OCI-LY7 (cell line): ENCODE measurements at regions of chr11 and their contacts with region 1.

Region 1: DNA sequence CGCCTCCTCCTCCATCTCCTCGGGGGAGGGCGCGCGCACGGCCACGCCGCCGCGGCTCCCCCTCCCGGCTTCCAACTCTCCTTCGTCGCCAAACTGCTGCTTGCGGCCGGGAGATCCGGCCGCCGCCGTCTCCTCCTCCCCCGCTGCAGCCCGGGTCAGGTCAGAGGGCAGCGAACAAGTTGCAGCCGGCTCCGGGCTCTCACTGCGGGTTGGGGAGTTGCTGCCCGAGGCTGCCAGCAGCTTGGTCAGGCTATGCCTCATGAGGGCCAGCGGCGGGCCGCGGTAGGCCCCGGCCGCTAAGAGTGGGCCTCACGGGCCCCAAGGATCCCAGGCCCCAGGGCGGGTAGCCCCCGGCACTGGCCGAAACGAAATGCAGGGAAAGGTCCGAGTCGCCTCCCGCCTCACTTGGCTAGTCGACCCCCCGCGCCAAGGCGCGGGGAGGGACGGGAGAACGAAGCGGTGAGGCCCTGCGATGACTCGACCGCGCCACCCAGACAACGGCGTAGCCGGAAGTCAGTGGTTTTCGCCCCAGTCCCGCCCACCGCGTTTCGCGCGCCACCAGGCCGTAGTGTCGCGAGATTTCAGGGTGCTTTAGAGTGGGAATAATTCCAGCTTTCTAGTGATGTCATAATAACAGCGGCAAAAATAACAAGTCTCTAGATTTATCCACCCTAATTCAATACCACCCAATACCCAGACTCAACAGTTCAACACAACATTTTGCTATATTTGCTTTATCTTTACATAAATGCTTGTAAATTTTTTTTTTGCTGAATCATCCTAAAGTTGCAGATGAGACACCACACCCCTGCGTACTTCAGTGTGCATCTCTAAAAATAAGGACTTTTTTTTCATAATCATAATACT is at the start of gene CREBZF:
- DNase-seq: peak; percentile 96
- H3K4me3 ChIP-seq: peak within 1 kb of the TSS; percentile 93
- H3K27ac ChIP-seq: peak within 1 kb of the TSS; percentile 86
- H3K4me1 ChIP-seq: peaks cover 26% of the 10 kb centered on the region
- CTCF ChIP-seq: no peak
- total RNA-seq, gene CREBZF: 120 and 128 TPM in 2 replicates

Region 2: DNA sequence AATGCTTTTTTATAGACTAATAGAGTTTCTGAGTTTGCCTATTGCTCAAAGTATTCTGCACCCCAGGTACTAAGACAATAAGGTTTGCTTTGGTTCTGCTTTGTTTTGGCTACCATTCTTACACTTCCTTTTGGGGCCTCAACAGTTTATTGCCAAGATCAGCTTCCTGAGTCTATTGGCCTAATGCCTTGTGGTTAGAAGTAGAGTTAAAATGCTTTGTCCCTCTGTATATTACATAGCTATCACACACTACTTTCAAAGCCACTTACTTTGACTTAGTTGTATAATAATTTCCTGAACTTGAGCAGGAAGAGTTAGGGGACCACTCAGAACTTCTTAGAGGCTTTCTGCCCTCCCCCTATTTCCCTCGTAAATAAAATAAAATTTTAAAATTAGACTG is 134.2 kb before region 1 on chr11:
- CTCF ChIA-PET with region 1: no interaction called
- POLR2A ChIA-PET with region 1: no interaction called
- intact Hi-C with region 1: no loop called
- DNase-seq: no peak
- H3K4me3 ChIP-seq: no peak overlapping the region
- H3K27ac ChIP-seq: no peak overlapping the region
- H3K4me1 ChIP-seq: no peaks in the 10 kb centered on the region
- CTCF ChIP-seq: no peak

Region 3: DNA sequence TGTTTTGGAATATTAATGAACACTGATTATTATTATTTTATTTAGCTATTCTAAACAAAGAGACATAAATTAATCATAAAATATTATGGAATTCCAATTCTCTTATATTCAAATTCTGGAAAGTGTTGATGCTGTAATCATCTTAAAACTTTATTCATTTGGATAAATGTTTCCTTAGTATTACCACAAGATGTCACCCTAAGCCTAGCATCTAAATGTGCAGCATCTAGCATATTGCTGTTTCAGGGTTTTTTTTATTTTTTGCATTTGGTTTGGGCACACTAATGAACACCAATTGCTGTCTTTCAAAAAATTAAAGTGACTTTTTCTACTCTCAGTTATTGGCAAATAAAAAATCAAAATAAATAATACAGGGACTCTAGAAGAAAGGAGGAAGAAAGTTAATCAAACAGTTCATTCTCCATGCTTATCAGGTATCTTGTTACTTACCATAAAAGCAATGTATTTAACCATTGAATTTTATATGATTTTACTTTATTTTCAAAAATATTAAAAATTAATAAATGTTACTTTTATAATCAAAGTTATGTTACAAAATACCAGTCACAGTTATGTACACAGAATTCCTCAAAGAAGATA is 69.5 kb before region 1 on chr11:
- CTCF ChIA-PET with region 1: no interaction called
- POLR2A ChIA-PET with region 1: no interaction called
- intact Hi-C with region 1: loop called (anchors 2 kb)
- DNase-seq: peak; percentile 66
- H3K4me3 ChIP-seq: no peak overlapping the region
- H3K27ac ChIP-seq: no peak overlapping the region
- H3K4me1 ChIP-seq: no peaks in the 10 kb centered on the region
- CTCF ChIP-seq: peak; percentile 90

Region 4: GRCh38 chr11:85627998-85628770 is 36.7 kb before region 1 on chr11 and contains the start of gene TMEM126B:
- CTCF ChIA-PET with region 1: no interaction called
- POLR2A ChIA-PET with region 1: interaction called, 7 read pairs
- intact Hi-C with region 1: loop called (anchors 2 kb)
- DNase-seq: peak; percentile 96
- H3K4me3 ChIP-seq: peak within 1 kb of the TSS; percentile 96
- H3K27ac ChIP-seq: peak within 1 kb of the TSS; percentile 40
- H3K4me1 ChIP-seq: peaks cover 35% of the 10 kb centered on the region
- CTCF ChIP-seq: no peak
- total RNA-seq, gene TMEM126B: 45.4 and 47.4 TPM in 2 replicates

Region 5: DNA sequence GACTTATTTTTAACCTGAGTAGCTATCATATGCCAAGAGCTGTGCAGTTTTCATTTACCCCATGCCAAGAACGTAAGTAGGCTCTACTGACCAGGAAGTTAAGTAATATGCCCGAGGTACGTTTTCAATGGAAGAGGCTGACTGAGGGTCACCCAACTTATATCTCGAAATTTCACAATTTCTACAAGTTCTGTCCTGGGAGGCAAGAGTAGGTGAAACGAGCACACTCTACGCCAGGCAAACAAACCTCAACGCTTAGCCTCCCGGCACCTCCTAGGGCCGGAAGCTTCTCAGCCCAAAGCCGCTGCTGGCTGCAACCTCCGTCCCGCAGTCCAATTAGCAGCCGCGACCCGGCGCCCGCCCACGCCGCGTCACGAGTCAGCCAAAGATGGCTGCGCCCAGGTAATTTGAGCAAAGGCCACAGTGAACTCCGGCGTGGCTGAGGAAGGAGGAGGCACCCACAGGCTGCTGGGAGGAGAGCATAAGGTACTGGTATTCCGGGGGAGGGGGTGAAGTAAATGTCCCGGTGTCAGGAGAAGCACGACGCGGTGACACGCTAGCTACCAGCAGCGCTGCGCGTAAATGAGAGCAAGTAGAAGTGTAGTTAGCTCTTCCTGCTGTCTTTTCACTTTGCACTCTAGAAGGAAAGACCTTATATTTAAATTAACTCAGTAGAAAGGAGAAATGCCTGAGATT is 17.1 kb before region 1 on chr11 and contains the start of gene TMEM126A:
- CTCF ChIA-PET with region 1: interaction called, 4 read pairs
- POLR2A ChIA-PET with region 1: interaction called, 94 read pairs
- intact Hi-C with region 1: loop called (anchors 1 kb)
- DNase-seq: peak; percentile 91
- H3K4me3 ChIP-seq: peak within 1 kb of the TSS; percentile 74
- H3K27ac ChIP-seq: peak within 1 kb of the TSS; percentile 72
- H3K4me1 ChIP-seq: peaks cover 33% of the 10 kb centered on the region
- CTCF ChIP-seq: no peak
- total RNA-seq, gene TMEM126A: 16.8 and 16.9 TPM in 2 replicates

Region 6: GRCh38 chr11:85893395-85893794 is 228.5 kb after region 1 on chr11:
- CTCF ChIA-PET with region 1: no interaction called
- POLR2A ChIA-PET with region 1: no interaction called
- intact Hi-C with region 1: no loop called
- DNase-seq: no peak
- H3K4me3 ChIP-seq: no peak overlapping the region
- H3K27ac ChIP-seq: no peak overlapping the region
- H3K4me1 ChIP-seq: no peaks in the 10 kb centered on the region
- CTCF ChIP-seq: no peak

Region 7: DNA sequence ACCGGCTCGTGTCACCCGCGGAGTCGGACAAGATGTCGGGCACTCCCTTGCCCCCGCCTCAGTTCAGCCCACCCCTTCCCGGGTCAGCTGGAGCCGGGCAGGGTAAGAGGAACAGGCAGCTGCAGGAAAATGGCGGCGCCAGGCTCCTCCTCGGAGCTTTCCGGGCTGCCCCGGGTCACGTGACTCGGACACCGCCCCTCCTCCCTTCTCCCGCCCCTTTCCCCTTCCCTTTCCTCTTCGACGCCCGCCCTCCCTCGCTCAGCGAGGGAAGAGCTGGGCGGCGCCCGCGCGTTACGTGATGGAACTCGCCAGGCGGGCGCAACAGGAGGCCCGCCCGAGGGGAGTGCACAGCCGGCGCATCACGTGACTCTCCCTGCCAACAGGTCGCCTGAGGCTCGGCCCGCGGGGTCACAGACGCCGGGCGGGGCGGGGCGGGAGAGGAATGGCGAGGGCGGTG is 404.1 kb after region 1 on chr11 and contains the start of gene PICALM:
- CTCF ChIA-PET with region 1: no interaction called
- POLR2A ChIA-PET with region 1: no interaction called
- intact Hi-C with region 1: loop called (anchors 5 kb)
- DNase-seq: peak; percentile 99
- H3K4me3 ChIP-seq: peak within 1 kb of the TSS; percentile 82
- H3K27ac ChIP-seq: peak within 1 kb of the TSS; percentile 70
- H3K4me1 ChIP-seq: peaks cover 38% of the 10 kb centered on the region
- CTCF ChIP-seq: no peak
- total RNA-seq, gene PICALM: 77.9 and 84.3 TPM in 2 replicates

Region 8: DNA sequence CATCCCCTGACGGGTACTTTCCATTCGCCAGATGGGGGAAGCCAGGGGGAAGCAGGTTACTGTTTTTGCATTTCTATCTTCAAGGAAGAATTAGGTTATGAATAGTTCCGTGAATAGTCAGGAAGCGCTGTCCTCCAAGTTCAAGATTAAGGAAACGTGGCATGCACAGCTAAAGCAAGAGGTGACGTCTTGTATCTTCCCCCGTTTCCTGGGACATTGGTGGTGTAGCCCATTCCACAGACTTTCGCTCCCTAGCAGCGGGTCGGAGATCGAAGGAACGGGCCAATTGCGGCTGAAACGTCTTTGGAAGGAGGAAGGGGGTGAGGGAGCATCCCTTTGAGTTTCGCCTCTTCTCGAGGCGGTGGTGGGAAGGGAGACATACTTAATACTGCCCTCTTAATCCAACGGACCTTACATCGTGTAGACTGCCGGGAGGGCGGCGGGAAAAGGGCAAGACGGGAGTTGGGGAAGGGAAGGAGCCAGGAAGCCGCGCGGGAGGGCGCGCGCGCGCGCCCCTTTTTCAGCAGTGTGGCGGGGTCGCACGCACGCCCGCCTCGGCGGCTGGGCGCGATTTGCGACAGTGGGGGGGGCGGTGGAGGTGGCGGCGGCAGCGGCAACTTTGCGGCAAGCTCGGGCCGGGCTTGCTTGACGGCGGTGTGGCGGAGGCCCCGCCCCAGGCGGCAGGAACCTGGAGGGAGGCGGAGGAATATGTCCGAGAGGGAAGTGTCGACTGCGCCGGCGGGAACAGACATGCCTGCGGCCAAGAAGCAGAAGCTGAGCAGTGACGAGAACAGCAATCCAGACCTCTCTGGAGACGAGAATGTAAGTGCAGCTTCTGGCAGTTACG is 579.9 kb after region 1 on chr11 and contains the start of gene EED:
- CTCF ChIA-PET with region 1: no interaction called
- POLR2A ChIA-PET with region 1: interaction called, 5 read pairs
- intact Hi-C with region 1: loop called (anchors 2 kb)
- DNase-seq: peak; percentile 95
- H3K4me3 ChIP-seq: peak within 1 kb of the TSS; percentile 93
- H3K27ac ChIP-seq: peak within 1 kb of the TSS; percentile 84
- H3K4me1 ChIP-seq: peaks cover 55% of the 10 kb centered on the region
- CTCF ChIP-seq: no peak
- total RNA-seq, gene EED: 25.2 and 30.4 TPM in 2 replicates

Region 9: DNA sequence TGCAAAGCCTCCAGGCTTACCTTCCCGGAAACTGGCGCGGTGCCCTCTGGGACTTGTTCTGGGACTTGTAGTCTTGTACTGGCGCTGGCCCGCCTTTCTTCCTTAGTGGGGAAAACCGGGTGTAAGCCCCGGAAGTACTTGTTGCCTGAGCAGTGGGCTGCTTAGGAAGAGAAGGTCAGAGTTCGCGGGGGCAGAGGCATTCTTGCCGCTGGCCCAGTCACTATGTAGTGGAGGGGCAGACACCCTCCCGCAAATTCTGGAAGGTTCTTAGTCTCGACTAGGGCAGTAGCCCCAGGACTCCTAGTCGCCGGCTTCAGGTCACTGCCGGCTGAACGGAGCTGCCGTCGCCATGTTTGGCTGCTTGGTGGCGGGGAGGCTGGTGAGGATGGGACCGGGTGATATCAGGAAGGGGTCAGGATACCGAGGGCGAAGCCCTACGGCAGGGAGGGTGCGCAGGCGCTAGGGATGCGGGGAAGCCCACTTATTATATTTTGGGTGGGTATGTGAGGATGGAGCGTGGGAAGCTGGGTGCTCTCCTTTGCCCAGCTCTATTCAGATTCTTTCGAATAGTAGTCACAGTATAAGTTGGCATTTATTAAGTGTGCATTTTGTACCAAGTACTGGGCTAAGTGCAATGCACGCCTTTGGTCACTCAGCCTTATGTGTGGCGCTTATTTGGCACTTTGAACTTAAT is 637.4 kb after region 1 on chr11 and contains the start of gene HIKESHI:
- CTCF ChIA-PET with region 1: no interaction called
- POLR2A ChIA-PET with region 1: no interaction called
- intact Hi-C with region 1: loop called (anchors 2 kb)
- DNase-seq: peak; percentile 95
- H3K4me3 ChIP-seq: peak within 1 kb of the TSS; percentile 76
- H3K27ac ChIP-seq: peak within 1 kb of the TSS; percentile 43
- H3K4me1 ChIP-seq: peaks cover 15% of the 10 kb centered on the region
- CTCF ChIP-seq: no peak
- total RNA-seq, gene HIKESHI: 22.2 and 34.9 TPM in 2 replicates